Endothelial cell of umbilical vein (primary cell): ENCODE measurements at regions of chr18 and their contacts with region 1.

Region 1: DNA sequence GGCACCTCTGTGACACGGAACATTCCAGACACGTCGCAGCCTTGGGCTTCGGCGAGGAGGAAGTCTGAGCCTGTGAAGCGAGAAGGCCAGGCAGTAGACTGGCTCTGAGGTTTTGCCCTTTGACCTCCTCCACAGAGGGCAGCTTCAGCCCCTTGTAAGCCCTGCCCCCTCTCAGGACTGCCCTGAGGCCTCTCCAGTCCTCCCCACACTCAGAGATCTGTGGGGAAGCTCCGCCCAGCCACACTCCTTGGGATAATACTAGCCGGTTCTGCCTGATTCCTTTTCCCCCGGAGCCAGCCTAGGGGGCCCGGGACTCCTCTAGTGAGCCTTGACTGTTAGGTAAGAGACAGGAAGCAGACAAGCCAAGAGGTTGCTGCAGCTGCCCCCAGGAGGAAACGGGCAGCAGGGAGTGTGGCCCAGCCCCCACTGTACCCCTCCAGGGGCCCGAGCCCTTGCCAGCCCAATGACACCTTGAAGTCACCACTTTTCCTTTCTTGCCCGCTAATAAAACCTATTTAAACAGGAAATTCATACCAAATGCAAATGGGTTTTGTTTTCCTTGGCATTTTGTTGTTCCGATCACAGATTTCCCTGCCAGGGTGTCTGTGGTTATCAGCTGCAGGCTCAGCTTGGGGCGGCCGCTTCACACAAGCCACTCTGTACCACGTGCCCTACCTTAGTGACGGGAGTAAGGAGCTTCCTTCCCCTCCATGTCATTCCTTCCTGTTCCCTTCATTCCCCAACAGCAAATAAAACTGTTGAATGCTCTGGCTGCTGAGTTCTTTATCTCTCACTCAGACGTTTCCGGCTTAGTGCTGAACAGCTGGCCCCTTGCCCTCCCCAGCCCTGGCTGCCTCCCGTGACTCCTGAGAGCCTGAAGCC is 124.7 kb downstream of the CABLES1 start:
- DNase-seq: peak; percentile 99
- H3K4me3 ChIP-seq: no peak overlapping the region
- H3K27ac ChIP-seq: peak overlapping the region; percentile 87
- H3K4me1 ChIP-seq: peaks cover 36% of the 10 kb centered on the region
- H3K27me3 ChIP-seq: no peaks in the 10 kb centered on the region
- CTCF ChIP-seq: no peak
- POLR2A ChIP-seq: peak; percentile 50

Region 2: GRCh38 chr18:23183411-23184155 is 76.4 kb before region 1 on chr18:
- CTCF ChIA-PET with region 1: no interaction called
- POLR2A ChIA-PET with region 1: no interaction called
- dilution Hi-C with region 1: no loop called
- intact Hi-C with region 1: loop called (anchors 1 kb)
- DNase-seq: no peak
- H3K4me3 ChIP-seq: no peak overlapping the region
- H3K27ac ChIP-seq: no peak overlapping the region
- H3K4me1 ChIP-seq: peaks cover 23% of the 10 kb centered on the region
- H3K27me3 ChIP-seq: no peaks in the 10 kb centered on the region
- CTCF ChIP-seq: no peak
- POLR2A ChIP-seq: no peak

Region 3: DNA sequence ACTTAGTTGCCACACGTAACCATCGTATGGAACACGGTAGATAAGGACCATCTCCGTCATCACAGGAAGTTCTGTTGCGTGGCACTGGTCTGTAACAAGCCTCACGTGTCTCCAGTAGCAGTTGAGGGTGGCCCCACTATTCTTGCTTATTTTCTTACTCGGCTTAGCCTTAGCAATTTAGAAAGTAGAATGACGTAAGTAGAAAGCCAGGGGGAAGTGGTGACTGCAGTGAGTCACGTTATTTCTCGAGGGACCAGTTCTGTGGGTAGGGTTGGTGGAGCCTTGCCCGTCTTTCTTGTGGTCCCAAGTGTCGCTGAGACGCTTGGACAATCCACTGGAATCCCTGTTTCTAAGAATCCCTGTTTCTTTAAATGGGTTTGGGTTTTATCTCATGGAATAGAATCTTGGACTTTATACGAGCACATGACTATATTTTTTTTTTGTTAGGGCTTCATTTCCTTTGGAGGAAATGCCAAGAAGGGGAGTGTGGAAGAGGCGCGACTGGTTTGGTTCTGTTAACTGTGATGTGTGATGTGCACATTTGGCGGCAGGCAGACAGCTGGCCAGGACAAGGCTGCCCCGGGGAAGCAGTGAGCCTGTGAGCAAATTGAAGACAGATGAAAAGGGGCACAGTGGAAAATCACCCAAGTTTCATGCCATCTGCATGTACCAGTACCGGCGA is 28.5 kb before region 1 on chr18:
- CTCF ChIA-PET with region 1: interaction called, 42 read pairs
- POLR2A ChIA-PET with region 1: interaction called, 5 read pairs
- dilution Hi-C with region 1: no loop called
- intact Hi-C with region 1: loop called (anchors 1 kb)
- DNase-seq: peak; percentile 97
- H3K4me3 ChIP-seq: no peak overlapping the region
- H3K27ac ChIP-seq: peak overlapping the region; percentile 90
- H3K4me1 ChIP-seq: peaks cover 50% of the 10 kb centered on the region
- H3K27me3 ChIP-seq: no peaks in the 10 kb centered on the region
- CTCF ChIP-seq: no peak
- POLR2A ChIP-seq: peak; percentile 27

Region 4: DNA sequence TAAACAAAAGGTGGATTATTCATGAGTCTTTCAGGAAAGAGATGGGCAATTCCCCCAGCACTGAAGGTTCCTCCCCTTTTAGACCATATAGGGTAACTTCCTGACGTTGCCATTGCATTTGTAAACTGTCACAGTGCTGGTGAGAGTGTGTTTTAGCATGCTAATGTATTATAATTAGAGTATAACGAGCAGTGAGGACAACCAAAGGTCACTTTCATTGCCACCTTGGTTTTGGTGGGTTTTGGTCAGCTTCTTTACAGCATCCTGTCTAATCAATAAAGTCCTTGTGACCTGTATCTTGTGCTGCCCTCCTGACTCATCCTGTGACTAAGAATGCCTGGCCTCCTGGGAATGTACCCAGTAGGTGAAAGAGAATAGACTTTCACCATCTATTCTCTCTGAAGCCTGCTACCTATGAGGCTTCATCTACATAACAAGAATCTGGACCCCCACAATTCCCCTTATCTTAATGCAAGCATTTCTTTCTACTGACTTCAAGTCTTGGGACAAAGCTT is 24.0 kb after region 1 on chr18:
- CTCF ChIA-PET with region 1: interaction called, 27 read pairs
- POLR2A ChIA-PET with region 1: interaction called, 7 read pairs
- dilution Hi-C with region 1: no loop called
- intact Hi-C with region 1: loop called (anchors 1 kb)
- DNase-seq: peak; percentile 52
- H3K4me3 ChIP-seq: no peak overlapping the region
- H3K27ac ChIP-seq: no peak overlapping the region
- H3K4me1 ChIP-seq: peaks cover 41% of the 10 kb centered on the region
- H3K27me3 ChIP-seq: no peaks in the 10 kb centered on the region
- CTCF ChIP-seq: no peak
- POLR2A ChIP-seq: no peak

Region 5: GRCh38 chr18:23337599-23338444 is 77.9 kb after region 1 on chr18:
- CTCF ChIA-PET with region 1: no interaction called
- POLR2A ChIA-PET with region 1: no interaction called
- dilution Hi-C with region 1: no loop called
- intact Hi-C with region 1: loop called (anchors 2 kb)
- DNase-seq: peak; percentile 58
- H3K4me3 ChIP-seq: no peak overlapping the region
- H3K27ac ChIP-seq: no peak overlapping the region
- H3K4me1 ChIP-seq: peaks cover 11% of the 10 kb centered on the region
- H3K27me3 ChIP-seq: no peaks in the 10 kb centered on the region
- CTCF ChIP-seq: no peak
- POLR2A ChIP-seq: no peak

Region 6: GRCh38 chr18:23401400-23402347 is 141.7 kb after region 1 on chr18:
- CTCF ChIA-PET with region 1: interaction called, 3 read pairs
- POLR2A ChIA-PET with region 1: interaction called, 3 read pairs
- dilution Hi-C with region 1: no loop called
- intact Hi-C with region 1: loop called (anchors 1 kb)
- DNase-seq: peak; percentile 97
- H3K4me3 ChIP-seq: no peak overlapping the region
- H3K27ac ChIP-seq: peak overlapping the region; percentile 92
- H3K4me1 ChIP-seq: peaks cover 22% of the 10 kb centered on the region
- H3K27me3 ChIP-seq: no peaks in the 10 kb centered on the region
- CTCF ChIP-seq: no peak
- POLR2A ChIP-seq: peak; percentile 80